ENCODE measurements at regions of chr11 and their contacts with region 1.

Region 1: GRCh38 chr11:91248199-91248807 is 976.3 kb upstream of the FAT3 start:
- DNase-seq: no peak
- H3K4me3 Mint-ChIP-seq: no peak overlapping the region
- H3K27ac Mint-ChIP-seq: no peak overlapping the region
- H3K4me1 Mint-ChIP-seq: no peaks in the 10 kb centered on the region
- H3K27me3 Mint-ChIP-seq: no peaks in the 10 kb centered on the region

Region 2: DNA sequence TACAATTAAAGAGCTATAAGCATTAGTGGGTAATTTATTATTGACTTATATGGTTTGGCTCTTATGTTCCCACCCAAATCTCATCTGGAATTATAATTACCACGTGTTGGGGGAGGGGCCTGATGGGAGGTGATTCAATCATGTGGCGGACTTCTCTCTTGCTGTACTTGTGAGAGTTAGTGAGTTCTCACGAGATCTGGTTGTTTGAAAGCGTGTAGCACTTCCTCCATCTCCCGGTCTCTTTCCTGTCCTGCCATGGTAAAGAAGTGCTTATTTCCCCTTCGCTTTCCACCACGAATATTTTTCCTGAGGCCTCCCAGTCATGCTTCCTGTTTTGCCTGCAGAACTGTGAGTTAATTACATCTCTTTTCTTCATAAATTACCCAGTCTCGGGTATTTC is 997.3 kb before region 1 on chr11:
- intact Hi-C with region 1: loop called (anchors 2 kb)
- DNase-seq: no peak
- H3K4me3 Mint-ChIP-seq: peak overlapping the region; percentile 73
- H3K27ac Mint-ChIP-seq: no peak overlapping the region
- H3K4me1 Mint-ChIP-seq: peaks cover 13% of the 10 kb centered on the region
- H3K27me3 Mint-ChIP-seq: peaks cover 10% of the 10 kb centered on the region

Measured in activated T-helper 1 cell treated with anti-CD3 and anti-CD28 coated beads, Interleukin-12 subunit alpha, Interleukin-12 subunit beta, Interleukin-2, Interleukin-4 antibody, amounts not matched to agents 30 ng/mL and 10 ng/mL and 1 ng/mL, durations not matched to agents 14 hours and 24 hours and 36 hours (primary cell).